A549 (cell line): ENCODE measurements at regions of chrX and their contacts with region 1.

Region 1: GRCh38 chrX:153662266-153662665 is 11.3 kb downstream of the PNCK start:
- DNase-seq: peak in 1 of 2 experiments; percentile 77
- ATAC-seq: peak; percentile 90 to 96
- H3K4me3 ChIP-seq: peak overlapping the region; percentile 22; the same call in 2 of the 3 replicates
- H3K27ac ChIP-seq: peak overlapping the region in 1 of 2 experiments; percentile 57; a peak in 3 of 6 replicates
- H3K4me1 ChIP-seq: no peaks in the 10 kb centered on the region
- CTCF ChIP-seq: peak; percentile 61
- EP300 ChIP-seq: no peak
- POLR2A ChIP-seq: no peak
- RAD21 ChIP-seq: peak; percentile 26 to 41; a peak in 4 of 5 replicates

Region 2: GRCh38 chrX:153554519-153555167 is 107.6 kb before region 1 on chrX:
- CTCF ChIA-PET with region 1: interaction called, 46 read pairs
- POLR2A ChIA-PET with region 1: no interaction called
- DNase-seq: peak; percentile 60 to 62
- ATAC-seq: peak; percentile 80 to 94
- H3K4me3 ChIP-seq: no peak overlapping the region
- H3K27ac ChIP-seq: no peak overlapping the region
- H3K4me1 ChIP-seq: no peaks in the 10 kb centered on the region
- CTCF ChIP-seq: peak; percentile 62
- EP300 ChIP-seq: no peak
- POLR2A ChIP-seq: no peak
- RAD21 ChIP-seq: peak; percentile 68 to 74

Region 3: DNA sequence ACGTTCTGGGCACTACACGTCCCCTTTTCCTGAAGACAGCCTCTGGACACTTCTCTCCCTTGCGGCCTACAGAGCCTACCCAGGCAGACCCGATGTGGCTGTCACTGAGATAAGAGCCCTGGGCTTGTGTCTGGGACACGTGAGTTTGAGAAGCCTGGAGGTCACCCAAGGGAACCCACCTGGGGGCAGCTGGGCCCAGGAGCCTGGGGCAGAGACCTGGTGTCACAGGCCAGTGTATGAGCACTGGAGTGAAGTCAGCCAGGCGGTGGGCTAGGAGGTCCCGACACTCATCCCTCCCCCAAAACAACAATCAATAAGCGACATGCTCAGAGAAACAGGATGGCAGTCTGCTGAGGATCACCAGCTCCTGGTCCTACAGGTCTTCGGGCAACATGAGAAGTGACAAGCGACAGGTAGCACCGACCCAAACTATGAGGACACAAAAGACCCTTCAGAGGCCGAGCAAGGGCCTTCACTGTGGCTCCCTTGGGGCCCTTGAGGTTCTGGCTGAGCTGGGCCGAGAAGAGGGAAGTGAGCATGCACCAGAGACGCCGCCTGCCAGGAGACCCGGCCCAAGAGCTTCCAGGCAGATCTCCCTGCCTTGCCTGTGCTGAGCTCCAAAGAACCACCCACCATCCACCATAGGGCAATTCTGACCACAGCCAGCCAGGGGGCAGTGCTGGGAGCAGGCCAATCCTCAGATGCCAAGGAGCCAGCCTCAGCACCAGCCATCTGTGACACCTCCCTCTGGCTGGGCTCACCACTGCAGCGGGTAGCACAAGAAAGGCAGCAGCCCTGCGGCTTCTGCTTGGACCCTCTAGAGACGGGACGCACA is 26.3 kb before region 1 on chrX:
- CTCF ChIA-PET with region 1: interaction called, 17 read pairs
- POLR2A ChIA-PET with region 1: no interaction called
- DNase-seq: peak; percentile 69 to 79
- ATAC-seq: peak; percentile 82 to 98
- H3K4me3 ChIP-seq: no peak overlapping the region
- H3K27ac ChIP-seq: no peak overlapping the region
- H3K4me1 ChIP-seq: no peaks in the 10 kb centered on the region
- CTCF ChIP-seq: peak; percentile 41; the same call in 2 of the 3 replicates
- EP300 ChIP-seq: no peak
- POLR2A ChIP-seq: no peak
- RAD21 ChIP-seq: peak in 1 of 2 experiments; percentile 34; a peak in 2 of 5 replicates

Region 4: DNA sequence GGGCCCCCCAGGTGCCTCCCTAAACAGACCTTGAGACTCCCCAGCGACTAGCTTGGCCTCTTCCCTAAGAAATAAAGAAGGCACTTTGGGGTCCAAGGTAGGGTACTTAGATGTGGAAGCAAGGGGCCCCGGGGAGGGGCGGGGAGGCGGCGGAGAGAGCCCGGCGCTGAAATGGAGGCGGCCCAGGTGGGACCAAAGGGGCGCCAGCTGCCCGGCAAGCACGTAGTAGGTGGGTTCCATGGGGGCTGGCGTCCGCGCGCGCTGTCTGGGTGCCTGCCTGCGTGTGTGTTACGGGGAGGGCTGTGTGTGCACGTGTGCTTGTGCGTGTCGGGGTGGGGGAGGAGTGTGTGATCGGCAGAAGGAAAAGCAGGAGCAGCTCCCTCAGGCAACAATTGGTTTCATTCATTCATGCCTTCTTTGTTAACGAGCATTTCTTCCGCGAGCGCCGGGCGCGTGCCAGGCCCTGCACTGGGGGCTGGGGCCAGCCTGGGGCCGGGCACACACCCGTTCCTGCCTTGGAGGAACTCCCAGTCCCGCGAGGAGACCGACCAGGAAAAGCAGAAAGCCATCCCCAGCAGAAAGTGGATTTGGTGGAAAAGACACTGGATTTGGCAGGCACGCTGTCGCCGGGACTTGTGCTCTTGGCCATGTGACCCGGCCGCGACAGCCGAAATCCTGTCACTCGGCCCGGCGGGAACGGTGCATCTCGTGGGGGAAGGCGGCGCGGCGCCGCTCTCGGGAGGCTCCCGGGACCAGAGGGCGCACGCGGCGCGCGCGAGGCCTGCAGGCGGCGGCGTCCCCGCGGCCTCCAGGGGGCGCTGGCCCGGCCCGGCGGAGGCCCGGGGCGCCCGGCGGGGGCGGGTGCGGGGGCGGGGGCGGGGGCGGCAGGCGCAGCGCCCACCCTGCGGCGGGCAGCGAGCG is 18.6 kb before region 1 on chrX:
- CTCF ChIA-PET with region 1: interaction called, 58 read pairs
- POLR2A ChIA-PET with region 1: no interaction called
- DNase-seq: peak; percentile 43 to 44
- ATAC-seq: peak; percentile 58 to 61; a peak in 5 of 6 replicates
- H3K4me3 ChIP-seq: peak overlapping the region; percentile 59
- H3K27ac ChIP-seq: peak overlapping the region; percentile 65 to 88
- H3K4me1 ChIP-seq: peaks cover 31% of the 10 kb centered on the region; the same call in 2 of the 3 replicates
- CTCF ChIP-seq: peak; percentile 58
- EP300 ChIP-seq: no peak
- POLR2A ChIP-seq: no peak
- RAD21 ChIP-seq: no peak

Region 5: GRCh38 chrX:153649178-153649914 is 12.9 kb before region 1 on chrX:
- CTCF ChIA-PET with region 1: interaction called, 78 read pairs
- POLR2A ChIA-PET with region 1: no interaction called
- DNase-seq: peak; percentile 57 to 69
- ATAC-seq: peak; percentile 55 to 77; a peak in 5 of 6 replicates
- H3K4me3 ChIP-seq: no peak overlapping the region
- H3K27ac ChIP-seq: no peak overlapping the region
- H3K4me1 ChIP-seq: peaks cover 13% of the 10 kb centered on the region; the same call in 1 of the 3 replicates
- CTCF ChIP-seq: peak; percentile 31
- EP300 ChIP-seq: no peak
- POLR2A ChIP-seq: no peak
- RAD21 ChIP-seq: peak; percentile 58 to 65; a peak in 4 of 5 replicates

Region 6: DNA sequence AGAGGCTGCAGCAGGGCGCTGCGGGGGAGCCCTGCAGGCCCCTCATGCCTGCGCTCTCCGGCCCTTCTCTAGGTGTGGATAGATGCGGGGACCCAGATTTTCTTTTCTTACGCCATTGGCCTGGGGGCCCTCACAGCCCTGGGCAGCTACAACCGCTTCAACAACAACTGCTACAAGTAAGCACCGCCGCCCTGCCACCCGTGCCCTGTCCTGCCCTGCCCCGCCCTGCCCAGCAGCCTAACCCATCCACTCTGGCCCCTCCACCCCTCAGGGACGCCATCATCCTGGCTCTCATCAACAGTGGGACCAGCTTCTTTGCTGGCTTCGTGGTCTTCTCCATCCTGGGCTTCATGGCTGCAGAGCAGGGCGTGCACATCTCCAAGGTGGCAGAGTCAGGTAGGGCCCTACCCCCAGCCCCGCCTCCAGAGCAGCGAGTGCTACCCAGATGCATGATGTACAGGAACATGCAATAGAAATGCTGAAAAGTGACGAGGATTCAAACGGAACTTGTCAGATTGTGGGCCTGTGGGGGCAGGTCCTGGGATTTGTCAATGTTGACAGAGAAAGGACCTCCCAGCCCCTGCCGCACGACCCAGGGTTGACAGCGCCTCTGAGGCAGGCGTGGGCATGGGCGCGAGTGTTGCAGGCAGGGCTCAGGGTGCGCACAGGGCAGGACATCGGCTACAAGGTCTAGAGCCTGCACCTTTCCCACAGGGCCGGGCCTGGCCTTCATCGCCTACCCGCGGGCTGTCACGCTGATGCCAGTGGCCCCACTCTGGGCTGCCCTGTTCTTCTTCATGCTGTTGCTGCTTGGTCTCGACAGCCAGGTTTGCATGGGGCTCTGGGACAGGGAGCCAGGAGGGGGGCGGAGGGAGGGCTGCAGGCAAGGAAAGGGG is 31.2 kb after region 1 on chrX:
- CTCF ChIA-PET with region 1: no interaction called
- POLR2A ChIA-PET with region 1: no interaction called
- DNase-seq: no peak
- ATAC-seq: peak in 1 of 2 experiments; percentile 5; a peak in 3 of 6 replicates
- H3K4me3 ChIP-seq: no peak overlapping the region
- H3K27ac ChIP-seq: no peak overlapping the region
- H3K4me1 ChIP-seq: peaks cover 7% of the 10 kb centered on the region; the same call in 2 of the 3 replicates
- CTCF ChIP-seq: no peak
- EP300 ChIP-seq: no peak
- POLR2A ChIP-seq: no peak
- RAD21 ChIP-seq: no peak